HEK293 (cell line): ENCODE measurements at regions of chr6 and their contacts with region 1.

Region 1: DNA sequence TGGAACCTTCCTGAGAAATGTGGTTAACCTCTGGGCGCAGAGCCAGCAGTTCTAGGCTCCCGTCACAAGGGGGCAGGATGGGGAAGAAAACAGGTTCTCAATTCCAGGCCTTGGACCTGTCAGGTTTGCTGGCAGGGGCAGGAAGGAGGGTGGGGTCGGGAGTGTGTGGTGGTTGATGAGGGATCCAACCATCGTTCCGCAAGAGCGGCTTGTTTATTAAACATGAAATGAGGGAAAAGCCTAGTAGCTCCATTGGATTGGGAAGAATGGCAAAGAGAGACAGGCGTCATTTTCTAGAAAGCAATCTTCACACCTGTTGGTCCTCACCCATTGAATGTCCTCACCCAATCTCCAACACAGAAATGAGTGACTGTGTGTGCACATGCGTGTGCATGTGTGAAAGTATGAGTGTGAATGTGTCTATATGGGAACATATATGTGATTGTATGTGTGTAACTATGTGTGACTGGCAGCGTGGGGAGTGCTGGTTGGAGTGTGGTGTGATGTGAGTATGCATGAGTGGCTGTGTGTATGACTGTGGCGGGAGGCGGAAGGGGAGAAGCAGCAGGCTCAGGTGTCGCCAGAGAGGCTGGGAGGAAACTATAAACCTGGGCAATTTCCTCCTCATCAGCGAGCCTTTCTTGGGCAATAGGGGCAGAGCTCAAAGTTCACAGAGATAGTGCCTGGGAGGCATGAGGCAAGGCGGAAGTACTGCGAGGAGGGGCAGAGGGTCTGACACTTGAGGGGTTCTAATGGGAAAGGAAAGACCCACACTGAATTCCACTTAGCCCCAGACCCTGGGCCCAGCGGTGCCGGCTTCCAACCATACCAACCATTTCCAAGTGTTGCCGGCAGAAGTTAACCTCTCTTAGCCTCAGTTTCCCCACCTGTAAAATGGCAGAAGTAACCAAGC is 29.6 kb downstream of the SRSF3 start:
- H3K4me3 ChIP-seq: no peak overlapping the region
- H3K27ac ChIP-seq: no peak overlapping the region
- H3K4me1 ChIP-seq: no peaks in the 10 kb centered on the region; the same call in 1 of the 2 replicates
- CTCF ChIP-seq: peak; percentile 92

Region 2: GRCh38 chr6:36605560-36606391 is 18.0 kb before region 1 on chr6:
- CTCF ChIA-PET with region 1: no interaction called
- POLR2A ChIA-PET with region 1: no interaction called
- H3K4me3 ChIP-seq: no peak overlapping the region
- H3K27ac ChIP-seq: no peak overlapping the region
- H3K4me1 ChIP-seq: no peaks in the 10 kb centered on the region
- CTCF ChIP-seq: no peak

Region 3: GRCh38 chr6:36642913-36643817 is 19.4 kb after region 1 on chr6:
- CTCF ChIA-PET with region 1: interaction called, 10 read pairs
- POLR2A ChIA-PET with region 1: interaction called, 5 read pairs
- H3K4me3 ChIP-seq: no peak overlapping the region
- H3K27ac ChIP-seq: no peak overlapping the region
- H3K4me1 ChIP-seq: peaks cover 10% of the 10 kb centered on the region
- CTCF ChIP-seq: no peak

Region 4: GRCh38 chr6:36735110-36736071 is 111.6 kb after region 1 on chr6:
- CTCF ChIA-PET with region 1: interaction called, 12 read pairs
- POLR2A ChIA-PET with region 1: no interaction called
- H3K4me3 ChIP-seq: no peak overlapping the region
- H3K27ac ChIP-seq: no peak overlapping the region
- H3K4me1 ChIP-seq: no peaks in the 10 kb centered on the region
- CTCF ChIP-seq: no peak